Activated naive CD4-positive, alpha-beta T cell treated with anti-CD3 and anti-CD28 coated beads for 36 hours (primary cell): ENCODE measurements at regions of chr2 and their contacts with region 1.

Region 1: GRCh38 chr2:208040199-208041171 is 15.2 kb upstream of the PLEKHM3 start:
- DNase-seq: peak; percentile 93
- H3K4me3 Mint-ChIP-seq: no peak overlapping the region
- H3K27ac Mint-ChIP-seq: no peak overlapping the region
- H3K4me1 Mint-ChIP-seq: peaks cover 3% of the 10 kb centered on the region
- H3K27me3 Mint-ChIP-seq: peaks cover 2% of the 10 kb centered on the region

Region 2: DNA sequence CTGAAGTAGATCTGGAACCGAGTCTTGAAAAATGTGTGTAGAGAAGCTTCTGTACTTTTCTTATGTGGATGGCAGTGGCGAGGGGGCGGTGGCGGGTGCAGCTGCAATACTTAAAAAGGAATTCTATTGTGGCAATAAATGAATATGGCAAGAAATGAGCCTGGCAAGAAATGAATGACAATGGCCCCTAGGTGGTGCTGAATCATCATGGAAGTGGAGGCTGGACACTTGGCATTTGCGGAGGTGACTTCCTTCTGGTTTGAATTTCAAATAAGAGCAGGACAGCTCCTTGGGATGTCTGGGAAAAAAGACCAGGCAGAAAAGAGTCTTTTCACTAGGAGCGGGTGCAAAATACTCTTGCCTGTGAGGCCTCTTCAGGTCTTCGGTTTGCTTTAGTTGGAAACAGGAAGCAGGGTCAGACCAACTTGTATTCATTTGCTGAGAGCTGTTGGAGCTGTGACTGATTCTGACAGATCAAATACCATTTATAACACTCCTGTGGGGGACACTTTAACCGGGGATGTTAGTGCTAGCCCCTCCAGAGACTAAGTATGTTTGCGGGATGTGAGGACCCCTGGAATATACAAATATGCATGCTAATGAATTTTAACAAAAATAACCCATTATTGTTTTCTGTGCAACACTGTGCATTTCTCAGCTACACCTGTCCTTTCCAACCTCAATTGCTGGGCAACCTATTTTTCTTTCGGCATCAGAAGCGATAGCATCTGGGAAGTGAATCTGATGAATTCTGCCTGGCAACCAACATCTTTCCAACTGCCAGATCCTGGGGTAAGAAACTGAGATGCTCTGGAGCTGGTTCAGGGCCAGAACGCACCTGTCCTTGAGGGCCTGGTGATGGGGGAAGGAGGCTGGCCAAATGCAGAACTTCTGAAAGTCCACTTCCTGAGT is 1239.7 kb before region 1 on chr2:
- CTCF ChIA-PET with region 1: no interaction called
- intact Hi-C with region 1: loop called (anchors 10 kb)
- DNase-seq: peak; percentile 70
- H3K4me3 Mint-ChIP-seq: no peak overlapping the region
- H3K27ac Mint-ChIP-seq: no peak overlapping the region
- H3K4me1 Mint-ChIP-seq: peaks cover 31% of the 10 kb centered on the region
- H3K27me3 Mint-ChIP-seq: no peaks in the 10 kb centered on the region

Region 3: DNA sequence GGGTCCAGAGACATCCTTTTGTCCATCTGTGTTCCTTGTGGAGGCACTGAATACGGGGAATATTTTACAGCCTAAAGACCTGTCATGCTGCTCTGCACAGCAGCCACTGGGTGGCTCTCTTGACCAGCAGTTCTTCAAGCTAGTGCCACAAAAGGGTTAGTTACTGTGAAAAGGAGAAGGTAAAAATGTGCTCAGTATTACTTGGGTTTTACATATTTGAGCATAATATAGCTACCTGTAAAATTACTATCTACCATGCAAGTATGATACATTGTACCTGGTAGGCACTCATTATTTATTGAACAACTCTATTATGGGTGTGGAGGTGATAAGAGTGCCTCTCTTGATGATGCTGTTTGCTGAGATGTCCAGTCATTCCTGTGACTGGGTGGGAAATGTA is 294.4 kb before region 1 on chr2:
- CTCF ChIA-PET with region 1: interaction called, 54 read pairs
- intact Hi-C with region 1: loop called (anchors 1 kb)
- DNase-seq: peak; percentile 62
- H3K4me3 Mint-ChIP-seq: no peak overlapping the region
- H3K27ac Mint-ChIP-seq: no peak overlapping the region
- H3K4me1 Mint-ChIP-seq: no peaks in the 10 kb centered on the region
- H3K27me3 Mint-ChIP-seq: no peaks in the 10 kb centered on the region

Region 4: DNA sequence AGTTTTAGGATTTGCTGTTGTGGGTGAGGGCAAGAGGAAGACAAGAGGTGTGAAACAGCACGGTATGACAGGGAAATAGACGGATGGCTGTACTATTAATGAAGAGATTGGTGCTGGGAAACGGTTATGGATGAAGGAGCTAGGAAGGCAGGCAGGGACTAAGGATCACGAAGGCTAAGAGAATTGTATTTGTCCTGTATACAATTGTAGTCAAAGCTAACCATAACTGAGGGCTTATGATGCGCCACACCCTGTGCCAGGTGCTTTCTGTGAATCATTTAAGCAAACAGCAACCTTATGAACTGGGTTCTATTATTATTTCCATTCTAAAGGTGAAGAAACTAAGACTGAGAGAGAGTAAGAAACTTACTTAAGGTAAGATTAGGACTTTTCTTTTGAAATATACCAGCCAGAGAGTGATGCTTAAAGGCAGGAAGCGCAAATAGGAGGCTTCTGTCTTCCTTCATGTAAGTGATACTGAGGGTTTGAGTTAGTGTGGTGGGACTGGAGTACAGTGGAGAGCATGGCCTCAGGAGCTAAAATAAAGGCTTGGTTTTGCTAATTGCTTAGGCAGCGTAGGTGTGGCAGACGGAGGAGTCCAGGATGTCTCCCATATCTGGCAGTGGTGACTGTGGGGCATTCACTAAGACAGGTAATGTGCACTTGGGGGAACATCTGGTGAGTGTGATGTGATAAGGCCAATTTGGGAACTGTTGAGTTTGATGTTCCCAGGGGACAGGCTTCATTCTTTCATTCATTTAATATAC is 101.0 kb before region 1 on chr2:
- CTCF ChIA-PET with region 1: interaction called, 12 read pairs
- intact Hi-C with region 1: no loop called
- DNase-seq: no peak
- H3K4me3 Mint-ChIP-seq: no peak overlapping the region
- H3K27ac Mint-ChIP-seq: no peak overlapping the region
- H3K4me1 Mint-ChIP-seq: no peaks in the 10 kb centered on the region
- H3K27me3 Mint-ChIP-seq: no peaks in the 10 kb centered on the region

Region 5: GRCh38 chr2:208025037-208025813 is 15.3 kb before region 1 on chr2 and contains the start of gene PLEKHM3:
- CTCF ChIA-PET with region 1: interaction called, 32 read pairs
- intact Hi-C with region 1: no loop called
- DNase-seq: peak; percentile 81
- H3K4me3 Mint-ChIP-seq: peak within 1 kb of the TSS; percentile 93
- H3K27ac Mint-ChIP-seq: peak within 1 kb of the TSS; percentile 88
- H3K4me1 Mint-ChIP-seq: peaks cover 14% of the 10 kb centered on the region
- H3K27me3 Mint-ChIP-seq: no peaks in the 10 kb centered on the region
- total RNA-seq, gene PLEKHM3: 6.5 to 7.0 TPM

Region 6: GRCh38 chr2:208195531-208195930 is 155.0 kb after region 1 on chr2:
- CTCF ChIA-PET with region 1: no interaction called
- intact Hi-C with region 1: no loop called
- DNase-seq: no peak
- H3K4me3 Mint-ChIP-seq: no peak overlapping the region
- H3K27ac Mint-ChIP-seq: no peak overlapping the region
- H3K4me1 Mint-ChIP-seq: no peaks in the 10 kb centered on the region
- H3K27me3 Mint-ChIP-seq: no peaks in the 10 kb centered on the region